ENCODE measurements at regions of chr7 and their contacts with region 1.

Region 1: GRCh38 chr7:44415047-44415446 is 75.4 kb downstream of the NUDCD3 start:
- DNase-seq: peak; percentile 73
- ATAC-seq: peak; percentile 93
- H3K4me3 ChIP-seq: no peak overlapping the region; the same call in 1 of the 2 replicates
- H3K27ac ChIP-seq: peak overlapping the region; percentile 11
- H3K4me1 ChIP-seq: peaks cover 17% of the 10 kb centered on the region
- H3K27me3 ChIP-seq: no peaks in the 10 kb centered on the region
- CTCF ChIP-seq: no peak

Region 2: GRCh38 chr7:44438816-44439215 is 23.8 kb after region 1 on chr7:
- CTCF ChIA-PET with region 1: no interaction called
- POLR2A ChIA-PET with region 1: interaction called, 11 read pairs
- intact Hi-C with region 1: no loop called
- DNase-seq: peak; percentile 9
- ATAC-seq: peak; percentile 54; the same call in 1 of the 2 replicates
- H3K4me3 ChIP-seq: no peak overlapping the region
- H3K27ac ChIP-seq: no peak overlapping the region
- H3K4me1 ChIP-seq: no peaks in the 10 kb centered on the region
- H3K27me3 ChIP-seq: no peaks in the 10 kb centered on the region
- CTCF ChIP-seq: no peak